ENCODE measurements at regions of chr1 and their contacts with region 1.

Region 1: DNA sequence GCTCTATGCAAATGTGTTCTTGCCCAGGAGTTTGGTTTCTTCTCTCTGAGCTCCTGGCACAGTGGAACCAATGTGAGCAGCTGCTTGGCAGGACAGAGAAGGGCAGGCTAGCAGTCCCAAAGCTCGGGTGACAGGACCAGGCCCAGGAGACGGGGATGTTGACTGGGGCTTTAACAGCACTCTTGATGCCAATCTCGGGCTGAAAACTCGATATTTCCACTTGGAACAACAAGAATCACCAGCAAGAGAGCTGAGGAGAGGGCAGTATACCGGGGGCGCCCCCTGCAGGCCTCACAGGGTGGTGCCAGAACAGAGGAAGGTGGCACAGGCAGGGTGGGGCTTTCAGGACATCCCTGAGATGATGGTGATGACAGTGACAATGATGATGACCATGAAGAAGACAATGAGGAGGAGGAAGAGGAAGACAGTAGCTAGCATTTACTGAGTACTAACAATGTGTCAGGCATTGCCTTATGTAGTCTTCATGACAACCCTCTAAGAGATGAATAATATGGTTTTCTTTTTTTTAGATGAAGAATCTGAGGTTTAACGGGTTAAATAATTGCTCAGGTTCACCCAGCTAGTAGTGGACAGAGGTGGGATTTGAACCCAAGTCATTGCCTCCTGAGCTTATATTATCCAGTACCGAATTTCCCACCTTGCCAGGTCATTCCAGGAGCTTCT is 2.7 kb upstream of the KCNJ9 start:
- DNase-seq: peak; percentile 84
- H3K4me3 Mint-ChIP-seq: no peak overlapping the region
- H3K27ac Mint-ChIP-seq: no peak overlapping the region
- H3K4me1 Mint-ChIP-seq: peaks cover 12% of the 10 kb centered on the region
- H3K27me3 Mint-ChIP-seq: peaks cover 51% of the 10 kb centered on the region

Region 2: GRCh38 chr1:159936273-159936904 is 142.3 kb before region 1 on chr1:
- CTCF ChIA-PET with region 1: interaction called, 6 read pairs
- POLR2A ChIA-PET with region 1: no interaction called
- intact Hi-C with region 1: loop called (anchors 2 kb)
- DNase-seq: peak; percentile 90
- H3K4me3 Mint-ChIP-seq: no peak overlapping the region
- H3K27ac Mint-ChIP-seq: no peak overlapping the region
- H3K4me1 Mint-ChIP-seq: peaks cover 6% of the 10 kb centered on the region
- H3K27me3 Mint-ChIP-seq: no peaks in the 10 kb centered on the region

Region 3: DNA sequence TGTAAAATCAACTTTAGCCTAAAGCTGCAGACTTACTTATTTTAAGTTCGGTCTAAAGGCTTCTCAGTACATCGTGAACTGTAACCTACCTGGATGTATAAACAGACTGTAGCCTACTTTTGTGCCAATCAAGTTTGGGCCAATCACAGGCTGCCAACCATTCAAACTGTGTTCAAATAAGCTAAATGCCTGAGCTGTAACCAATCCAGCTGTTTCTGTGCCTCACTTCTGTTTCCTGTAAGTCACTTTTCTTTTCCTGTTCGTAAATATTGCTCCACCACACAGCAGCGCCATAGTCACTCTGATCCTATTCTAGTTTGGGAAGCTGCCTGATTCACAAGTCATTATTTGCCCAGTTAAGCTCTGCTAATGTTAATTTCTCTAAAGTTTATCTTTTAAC is 87.1 kb before region 1 on chr1:
- CTCF ChIA-PET with region 1: no interaction called
- POLR2A ChIA-PET with region 1: no interaction called
- intact Hi-C with region 1: no loop called
- DNase-seq: peak; percentile 24
- H3K4me3 Mint-ChIP-seq: no peak overlapping the region
- H3K27ac Mint-ChIP-seq: no peak overlapping the region
- H3K4me1 Mint-ChIP-seq: peaks cover 5% of the 10 kb centered on the region
- H3K27me3 Mint-ChIP-seq: peaks cover 1% of the 10 kb centered on the region

Region 4: GRCh38 chr1:160046494-160047110 is 32.1 kb before region 1 on chr1:
- CTCF ChIA-PET with region 1: interaction called, 615 read pairs
- POLR2A ChIA-PET with region 1: interaction called, 3 read pairs
- intact Hi-C with region 1: loop called (anchors 1 kb)
- DNase-seq: peak; percentile 61
- H3K4me3 Mint-ChIP-seq: peak overlapping the region; percentile 50
- H3K27ac Mint-ChIP-seq: no peak overlapping the region
- H3K4me1 Mint-ChIP-seq: peaks cover 9% of the 10 kb centered on the region
- H3K27me3 Mint-ChIP-seq: peaks cover 15% of the 10 kb centered on the region

Region 5: DNA sequence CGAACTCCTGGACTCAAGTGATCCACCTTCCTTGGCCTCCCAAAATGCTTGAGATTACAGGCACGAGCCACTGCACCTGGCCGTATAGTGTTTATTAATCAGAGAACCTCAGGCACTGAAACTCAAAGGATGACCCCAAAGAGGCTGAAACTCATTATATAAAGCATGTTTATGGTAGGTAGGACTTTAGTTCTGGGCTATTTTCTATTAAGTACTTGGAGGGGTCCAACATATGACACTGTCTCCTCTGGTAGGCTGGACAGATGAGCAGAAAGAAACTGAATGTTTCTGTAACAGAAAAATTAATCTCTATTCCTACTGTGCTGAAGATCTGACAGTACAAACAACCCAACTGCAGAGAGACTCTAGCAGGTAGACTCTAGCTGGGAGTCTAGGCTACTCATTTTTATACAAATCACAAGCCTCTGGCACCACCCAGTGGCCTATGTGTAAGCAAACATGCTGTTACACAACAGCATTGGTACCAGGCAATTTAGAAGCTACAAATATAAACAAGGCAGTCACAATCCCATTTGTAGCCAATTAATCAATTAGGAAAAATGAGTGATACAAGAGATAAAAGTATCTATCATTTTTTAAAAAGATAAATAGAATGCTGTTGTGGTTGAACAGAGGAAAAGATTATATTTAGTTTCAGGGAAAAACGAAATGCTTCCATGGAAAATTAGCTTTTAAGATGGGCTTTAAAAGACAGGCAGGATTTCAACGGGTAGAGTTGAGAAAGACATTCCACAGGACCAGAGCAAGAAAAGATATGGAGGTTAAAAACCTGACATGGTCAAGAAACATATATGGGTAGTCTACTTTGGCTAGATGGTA is 173.3 kb after region 1 on chr1:
- CTCF ChIA-PET with region 1: no interaction called
- POLR2A ChIA-PET with region 1: no interaction called
- intact Hi-C with region 1: no loop called
- DNase-seq: peak; percentile 57
- H3K4me3 Mint-ChIP-seq: no peak overlapping the region
- H3K27ac Mint-ChIP-seq: peak overlapping the region; percentile 5
- H3K4me1 Mint-ChIP-seq: peaks cover 11% of the 10 kb centered on the region
- H3K27me3 Mint-ChIP-seq: no peaks in the 10 kb centered on the region

Measured in activated CD4-positive, alpha-beta memory T cell treated with anti-CD3 and anti-CD28 coated beads for 36 hours (primary cell).